Caco-2 (cell line): ENCODE measurements at regions of chr13 and their contacts with region 1.

Region 1: GRCh38 chr13:26601669-26602068 is 44.2 kb downstream of the WASF3 start:
- DNase-seq: no peak
- H3K4me3 ChIP-seq: no peak overlapping the region
- H3K4me3 Mint-ChIP-seq: no peak overlapping the region
- H3K27ac Mint-ChIP-seq: no peak overlapping the region
- H3K4me1 ChIP-seq: no peaks in the 10 kb centered on the region
- H3K4me1 Mint-ChIP-seq: no peaks in the 10 kb centered on the region
- H3K27me3 ChIP-seq: no peaks in the 10 kb centered on the region
- H3K27me3 Mint-ChIP-seq: peaks cover 27% of the 10 kb centered on the region
- CTCF ChIP-seq: peak in 1 of 2 experiments; percentile 10

Region 2: DNA sequence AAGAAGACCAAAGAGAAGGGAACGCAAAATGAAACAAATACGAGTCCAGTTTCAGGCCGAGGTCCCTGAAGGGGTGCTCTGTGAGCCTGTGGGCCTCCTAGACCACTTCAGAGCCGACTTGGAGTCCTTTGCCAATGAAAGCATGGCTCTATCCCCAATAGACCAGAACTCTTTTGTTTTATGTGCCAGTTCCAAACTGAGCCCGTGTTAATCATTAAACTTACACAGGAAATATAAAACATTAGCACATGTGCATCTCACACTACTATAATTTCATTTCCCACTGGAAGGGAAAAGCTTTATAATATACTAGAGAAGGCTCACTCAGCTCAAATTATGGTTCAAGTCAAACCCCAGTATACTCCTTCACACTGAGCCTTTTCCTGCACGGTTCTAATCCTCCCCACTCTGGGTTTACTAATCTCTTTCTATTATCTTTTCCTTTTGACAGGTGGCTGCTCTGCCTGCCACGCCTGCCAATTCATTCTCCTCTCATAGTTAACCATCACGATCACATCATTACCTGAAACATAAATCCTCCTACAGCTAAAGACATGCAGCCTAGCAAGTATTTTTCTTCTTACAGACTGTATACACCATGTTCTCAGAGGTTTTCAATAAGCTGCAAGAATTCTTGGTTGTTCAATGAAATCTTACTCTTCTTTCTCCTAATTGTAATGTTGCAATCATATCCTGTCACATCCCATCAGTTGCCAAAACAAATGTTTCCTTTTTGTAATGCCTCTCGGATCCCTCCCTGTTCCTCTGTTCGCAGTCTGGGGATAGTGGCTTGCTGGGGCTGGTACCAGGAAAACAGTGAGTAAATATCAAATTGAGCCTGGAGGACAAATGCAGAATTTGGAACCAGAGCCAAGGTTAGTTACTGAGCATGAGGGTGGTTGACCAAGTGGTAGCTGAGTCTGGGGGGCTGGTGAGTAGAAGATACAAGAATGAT is 63.0 kb before region 1 on chr13:
- CTCF ChIA-PET with region 1: no interaction called
- POLR2A ChIA-PET with region 1: no interaction called
- intact Hi-C with region 1: loop called (anchors 5 kb)
- DNase-seq: no peak
- H3K4me3 ChIP-seq: no peak overlapping the region
- H3K4me3 Mint-ChIP-seq: no peak overlapping the region
- H3K27ac Mint-ChIP-seq: no peak overlapping the region
- H3K4me1 ChIP-seq: no peaks in the 10 kb centered on the region
- H3K4me1 Mint-ChIP-seq: no peaks in the 10 kb centered on the region
- H3K27me3 ChIP-seq: no peaks in the 10 kb centered on the region
- H3K27me3 Mint-ChIP-seq: peaks cover 18% of the 10 kb centered on the region
- CTCF ChIP-seq: no peak

Region 3: DNA sequence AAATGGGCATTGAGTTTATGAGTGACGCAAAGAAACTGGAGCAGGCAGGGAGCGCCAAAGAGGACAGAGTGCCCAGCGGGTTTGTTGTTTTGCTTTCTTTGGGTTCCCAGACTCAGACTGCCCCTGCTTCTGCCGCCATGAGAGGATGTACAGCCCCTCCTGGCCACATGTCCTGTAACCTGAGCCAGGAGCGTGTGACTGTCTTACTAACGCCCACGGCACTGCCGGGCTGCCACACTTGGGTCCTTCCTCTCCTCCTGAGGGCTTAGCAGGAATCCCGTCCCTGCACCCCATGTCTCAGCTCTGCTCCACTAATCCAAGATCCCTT is 78.4 kb after region 1 on chr13:
- CTCF ChIA-PET with region 1: no interaction called
- POLR2A ChIA-PET with region 1: no interaction called
- intact Hi-C with region 1: no loop called
- DNase-seq: no peak
- H3K4me3 ChIP-seq: no peak overlapping the region
- H3K4me3 Mint-ChIP-seq: no peak overlapping the region
- H3K27ac Mint-ChIP-seq: no peak overlapping the region
- H3K4me1 ChIP-seq: no peaks in the 10 kb centered on the region
- H3K4me1 Mint-ChIP-seq: no peaks in the 10 kb centered on the region
- H3K27me3 ChIP-seq: no peaks in the 10 kb centered on the region; the same call in none of the 2 replicates
- H3K27me3 Mint-ChIP-seq: peaks cover 27% of the 10 kb centered on the region
- CTCF ChIP-seq: no peak

Region 4: DNA sequence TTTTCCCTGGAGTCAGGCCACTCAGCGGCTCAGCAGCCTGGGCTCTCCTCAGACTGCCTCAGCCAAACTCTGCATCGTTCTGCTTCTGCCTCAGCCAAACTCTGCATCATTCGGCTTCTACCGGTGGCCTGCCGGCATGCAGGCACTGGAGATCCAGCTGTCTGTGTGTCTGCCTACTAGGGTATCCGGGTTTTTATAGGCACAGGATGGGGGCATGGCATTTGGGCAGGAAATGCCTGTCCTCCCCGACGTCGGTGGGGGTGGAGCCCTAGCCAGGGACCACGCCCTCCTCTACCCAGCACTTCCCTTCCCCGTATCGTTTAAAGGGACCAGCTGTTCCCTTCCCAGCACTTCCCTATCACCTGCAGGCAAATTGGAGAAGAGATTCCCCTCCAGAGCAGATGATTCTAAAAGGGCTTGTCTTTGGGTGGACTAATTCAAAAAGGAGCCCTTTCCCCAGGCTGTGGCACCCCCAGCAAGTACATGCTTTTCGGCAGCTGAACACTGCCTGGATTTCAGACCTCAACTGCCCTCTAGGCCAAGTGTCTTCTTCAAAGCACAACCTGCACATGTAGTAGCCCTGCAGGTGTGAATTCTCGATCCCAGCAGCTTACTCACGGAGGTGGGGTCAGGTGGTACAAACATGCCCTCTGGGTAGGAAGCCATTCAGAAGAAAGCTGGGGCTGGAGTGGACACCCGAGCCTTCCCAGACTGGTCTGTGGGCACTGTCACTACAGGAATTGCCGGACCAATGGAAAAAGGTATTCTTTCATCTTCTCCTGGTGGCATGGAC is 184.4 kb after region 1 on chr13:
- CTCF ChIA-PET with region 1: no interaction called
- POLR2A ChIA-PET with region 1: no interaction called
- intact Hi-C with region 1: no loop called
- DNase-seq: no peak
- H3K4me3 ChIP-seq: no peak overlapping the region
- H3K4me3 Mint-ChIP-seq: peak overlapping the region; percentile 14
- H3K27ac Mint-ChIP-seq: no peak overlapping the region
- H3K4me1 ChIP-seq: peaks cover 4% of the 10 kb centered on the region; the same call in 1 of the 2 replicates
- H3K4me1 Mint-ChIP-seq: no peaks in the 10 kb centered on the region
- H3K27me3 ChIP-seq: no peaks in the 10 kb centered on the region; the same call in 1 of the 2 replicates
- H3K27me3 Mint-ChIP-seq: peaks cover 26% of the 10 kb centered on the region
- CTCF ChIP-seq: no peak